Activated CD8-positive, alpha-beta T cell treated with anti-CD3 and anti-CD28 coated beads, Interleukin-2, amount 10 ng/mL, durations not matched to agents 7 days and 5 days (primary cell): ENCODE measurements at regions of chr17 and their contacts with region 1.

Region 1: DNA sequence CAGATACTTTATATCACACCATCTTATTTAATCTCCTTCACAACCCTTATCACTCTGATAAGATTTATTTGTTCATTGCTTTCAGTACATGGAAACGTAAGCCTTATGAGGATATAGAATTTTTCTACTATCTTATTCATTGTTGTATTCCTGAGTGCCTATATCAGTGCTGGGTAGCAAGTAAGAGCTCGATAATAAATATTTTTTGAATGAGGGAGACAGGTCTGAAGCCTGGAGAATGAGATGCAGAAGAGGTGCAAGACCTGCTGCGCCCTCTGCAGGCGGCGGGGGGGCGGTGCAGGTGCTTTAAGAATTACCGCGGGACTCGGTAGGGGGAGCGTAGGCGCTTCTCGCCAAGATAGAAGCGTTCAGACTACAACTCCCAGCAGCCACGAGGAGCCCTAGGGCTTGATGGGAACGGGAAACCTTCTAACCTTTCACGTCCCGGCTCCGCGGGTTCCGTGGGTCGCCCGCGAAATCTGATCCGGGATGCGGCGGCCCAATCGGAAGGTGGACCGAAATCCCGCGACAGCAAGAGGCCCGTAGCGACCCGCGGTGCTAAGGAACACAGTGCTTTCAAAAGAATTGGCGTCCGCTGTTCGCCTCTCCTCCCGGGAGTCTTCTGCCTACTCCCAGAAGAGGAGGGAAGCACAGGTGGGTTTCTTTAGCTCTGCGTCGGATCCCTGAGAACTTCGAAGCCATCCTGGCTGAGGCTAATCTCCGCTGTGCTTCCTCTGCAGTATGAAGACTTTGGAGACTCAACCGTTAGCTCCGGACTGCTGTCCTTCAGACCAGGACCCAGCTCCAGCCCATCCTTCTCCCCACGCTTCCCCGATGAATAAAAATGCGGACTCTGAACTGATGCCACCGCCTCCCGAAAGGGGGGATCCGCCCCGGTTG is at the start of gene WRAP53:
- DNase-seq: peak; percentile 97
- ATAC-seq: peak; percentile 85
- H3K4me3 Mint-ChIP-seq: peak within 1 kb of the TSS; percentile 98
- H3K27ac Mint-ChIP-seq: peak within 1 kb of the TSS; percentile 100
- H3K4me1 Mint-ChIP-seq: peaks cover 40% of the 10 kb centered on the region
- H3K27me3 Mint-ChIP-seq: no peaks in the 10 kb centered on the region
- total RNA-seq, gene WRAP53: 27.1 to 29.3 TPM

Region 2: DNA sequence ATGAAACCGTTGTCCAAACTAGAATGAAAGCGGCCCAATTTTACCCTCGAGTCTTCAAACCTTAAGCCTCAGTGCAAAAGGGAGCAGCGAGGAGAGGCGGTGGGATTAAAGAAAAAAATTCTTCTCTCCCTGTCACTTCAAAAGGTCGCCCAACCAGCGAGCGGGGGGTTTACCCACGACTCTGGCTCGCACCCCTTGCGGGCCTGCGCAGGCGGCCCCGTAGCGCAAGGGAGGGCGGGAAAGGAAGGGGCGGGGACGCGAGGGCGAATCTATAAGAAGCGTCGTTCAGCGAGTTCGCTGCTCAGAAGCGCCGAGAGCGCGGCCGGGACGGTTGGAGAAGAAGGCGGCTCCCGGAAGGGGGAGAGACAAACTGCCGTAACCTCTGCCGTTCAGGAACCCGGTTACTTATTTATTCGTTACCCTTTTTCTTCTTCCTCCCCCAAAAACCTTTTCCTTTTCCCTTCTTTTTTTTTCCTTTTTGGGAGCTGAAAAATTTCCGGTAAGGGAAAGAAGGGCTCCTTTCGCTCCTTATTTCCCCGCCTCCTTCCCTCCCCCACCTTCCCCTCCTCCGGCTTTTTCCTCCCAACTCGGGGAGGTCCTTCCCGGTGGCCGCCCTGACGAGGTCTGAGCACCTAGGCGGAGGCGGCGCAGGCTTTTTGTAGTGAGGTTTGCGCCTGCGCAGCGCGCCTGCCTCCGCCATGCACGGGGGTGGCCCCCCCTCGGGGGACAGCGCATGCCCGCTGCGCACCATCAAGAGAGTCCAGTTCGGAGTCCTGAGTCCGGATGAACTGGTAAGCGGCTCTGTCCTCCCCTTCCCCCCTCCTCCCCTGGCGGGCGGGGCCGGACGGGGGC is 203.9 kb before region 1 on chr17 and contains the start of gene POLR2A:
- CTCF ChIA-PET with region 1: interaction called, 4 read pairs
- POLR2A ChIA-PET with region 1: interaction called, 11 read pairs
- DNase-seq: peak; percentile 97
- ATAC-seq: peak; percentile 64
- H3K4me3 Mint-ChIP-seq: peak within 1 kb of the TSS; percentile 94
- H3K27ac Mint-ChIP-seq: peak within 1 kb of the TSS; percentile 99
- H3K4me1 Mint-ChIP-seq: peaks cover 63% of the 10 kb centered on the region
- H3K27me3 Mint-ChIP-seq: no peaks in the 10 kb centered on the region
- total RNA-seq, gene POLR2A: 183 to 185 TPM

Region 3: GRCh38 chr17:7583253-7584109 is 104.7 kb before region 1 on chr17 and contains the start of gene MPDU1:
- CTCF ChIA-PET with region 1: interaction called, 45 read pairs
- POLR2A ChIA-PET with region 1: interaction called, 82 read pairs
- DNase-seq: peak; percentile 97
- ATAC-seq: peak; percentile 82
- H3K4me3 Mint-ChIP-seq: peak within 1 kb of the TSS; percentile 98
- H3K27ac Mint-ChIP-seq: peak within 1 kb of the TSS; percentile 100
- H3K4me1 Mint-ChIP-seq: peaks cover 69% of the 10 kb centered on the region
- H3K27me3 Mint-ChIP-seq: no peaks in the 10 kb centered on the region
- total RNA-seq, gene MPDU1: 69.0 to 70.4 TPM

Region 4: DNA sequence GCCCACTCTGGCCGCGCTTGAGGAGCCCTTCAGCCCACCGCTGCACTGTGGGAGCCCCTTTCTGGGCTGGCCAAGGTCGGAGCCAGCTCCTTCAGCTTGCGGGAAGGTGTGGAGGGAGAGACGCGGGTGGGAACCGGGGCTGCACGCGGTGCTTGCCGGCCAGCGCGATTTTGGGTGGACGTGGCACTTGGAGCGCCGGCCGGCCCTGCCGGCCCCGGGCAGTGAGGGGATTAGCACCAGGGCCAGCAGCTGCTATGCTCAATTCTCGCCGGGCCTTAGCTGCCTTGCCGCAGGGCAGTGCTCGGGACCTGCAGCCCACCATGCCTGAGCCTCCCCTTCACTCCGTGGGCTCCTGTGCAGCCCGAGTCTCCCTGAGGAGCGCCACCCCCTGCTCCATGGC is 47.4 kb before region 1 on chr17:
- CTCF ChIA-PET with region 1: interaction called, 129 read pairs
- POLR2A ChIA-PET with region 1: interaction called, 6 read pairs
- DNase-seq: no peak
- ATAC-seq: no peak
- H3K4me3 Mint-ChIP-seq: no peak overlapping the region
- H3K27ac Mint-ChIP-seq: no peak overlapping the region
- H3K4me1 Mint-ChIP-seq: peaks cover 8% of the 10 kb centered on the region
- H3K27me3 Mint-ChIP-seq: peaks cover 9% of the 10 kb centered on the region

Region 5: GRCh38 chr17:7711051-7711755 is 23.0 kb after region 1 on chr17:
- CTCF ChIA-PET with region 1: interaction called, 25 read pairs
- POLR2A ChIA-PET with region 1: interaction called, 37 read pairs
- DNase-seq: no peak
- ATAC-seq: no peak
- H3K4me3 Mint-ChIP-seq: no peak overlapping the region
- H3K27ac Mint-ChIP-seq: peak overlapping the region; percentile 17
- H3K4me1 Mint-ChIP-seq: peaks cover 31% of the 10 kb centered on the region
- H3K27me3 Mint-ChIP-seq: peaks cover 50% of the 10 kb centered on the region

Region 6: GRCh38 chr17:7729816-7730215 is 41.7 kb after region 1 on chr17:
- CTCF ChIA-PET with region 1: no interaction called
- POLR2A ChIA-PET with region 1: no interaction called
- DNase-seq: no peak
- ATAC-seq: no peak
- H3K4me3 Mint-ChIP-seq: no peak overlapping the region
- H3K27ac Mint-ChIP-seq: no peak overlapping the region
- H3K4me1 Mint-ChIP-seq: no peaks in the 10 kb centered on the region
- H3K27me3 Mint-ChIP-seq: peaks cover 26% of the 10 kb centered on the region

Region 7: DNA sequence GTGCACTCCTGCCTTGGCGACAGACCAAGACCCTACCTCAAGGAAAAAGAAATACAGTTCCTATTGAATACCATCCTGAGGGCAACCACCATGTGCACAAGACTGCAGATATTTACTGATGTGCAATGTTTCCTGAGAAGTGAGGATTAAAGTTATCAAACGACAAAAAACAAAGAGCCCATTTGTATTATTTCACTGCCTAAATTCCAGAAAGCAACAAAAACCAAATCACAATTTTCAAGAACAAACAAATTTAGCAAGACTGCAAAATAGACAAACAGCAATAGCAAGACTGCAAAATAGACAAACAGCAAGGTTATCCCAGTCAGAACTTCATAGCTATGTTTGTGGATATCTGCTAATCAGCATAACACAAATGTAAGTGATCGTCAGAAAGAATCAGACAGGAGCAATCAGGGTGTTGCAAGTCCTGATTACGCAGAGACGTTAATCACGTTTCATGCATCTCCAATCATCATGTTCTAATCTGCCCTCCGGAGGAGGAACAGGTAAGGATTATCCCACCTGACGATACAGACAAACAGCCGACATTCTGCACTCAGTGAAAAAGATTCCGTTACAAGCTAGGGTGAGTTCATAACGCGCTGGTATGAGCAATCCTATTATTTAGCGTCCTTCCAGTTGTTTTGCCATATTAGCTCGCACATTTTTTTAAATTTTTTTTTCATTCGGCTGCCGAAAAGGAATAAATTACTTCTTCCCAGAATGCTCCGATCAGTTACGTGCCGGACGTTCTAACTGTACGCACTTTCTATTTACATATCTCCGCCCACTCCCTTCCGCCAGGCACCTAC is 485.1 kb after region 1 on chr17:
- CTCF ChIA-PET with region 1: no interaction called
- POLR2A ChIA-PET with region 1: interaction called, 11 read pairs
- DNase-seq: peak; percentile 90
- ATAC-seq: peak; percentile 79
- H3K4me3 Mint-ChIP-seq: peak overlapping the region; percentile 85
- H3K27ac Mint-ChIP-seq: peak overlapping the region; percentile 99
- H3K4me1 Mint-ChIP-seq: peaks cover 50% of the 10 kb centered on the region
- H3K27me3 Mint-ChIP-seq: no peaks in the 10 kb centered on the region